ENCODE measurements at regions of chr22 and their contacts with region 1.

Region 1: GRCh38 chr22:26461188-26461810 is 22.3 kb downstream of the HPS4 start:
- DNase-seq: peak; percentile 53 to 83 (median 70)
- ATAC-seq: peak; percentile 48 to 65
- H3K4me3 ChIP-seq: no peak overlapping the region
- H3K27ac ChIP-seq: no peak overlapping the region
- H3K4me1 ChIP-seq: no peaks in the 10 kb centered on the region
- H3K27me3 ChIP-seq: no peaks in the 10 kb centered on the region

Region 2: DNA sequence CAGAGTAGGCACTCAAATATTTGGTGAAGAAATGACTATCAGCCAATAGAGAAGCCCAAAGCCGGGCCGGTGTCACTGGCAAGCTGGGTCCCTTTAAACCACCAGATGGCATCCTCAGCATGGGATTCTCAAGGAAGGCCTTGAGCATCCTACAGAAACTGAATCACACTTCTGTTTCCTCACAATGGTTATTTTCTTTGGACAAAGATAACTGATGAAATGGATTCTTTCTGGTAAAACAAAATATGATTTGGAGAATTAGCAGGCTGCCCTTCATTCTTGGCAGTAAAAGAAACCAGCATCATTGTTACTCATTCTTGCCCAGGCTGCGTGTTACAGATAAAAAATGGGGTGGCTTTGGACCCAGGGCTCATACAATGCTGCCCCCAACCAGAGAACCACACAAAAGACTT is 62.6 kb before region 1 on chr22:
- intact Hi-C with region 1: loop called in 3 of 4 experiments (anchors 5 kb)
- DNase-seq: peak; percentile 42 to 63 (median 58)
- ATAC-seq: peak; percentile 67 to 88
- H3K4me3 ChIP-seq: no peak overlapping the region
- H3K27ac ChIP-seq: no peak overlapping the region
- H3K4me1 ChIP-seq: no peaks in the 10 kb centered on the region
- H3K27me3 ChIP-seq: no peaks in the 10 kb centered on the region

Region 3: DNA sequence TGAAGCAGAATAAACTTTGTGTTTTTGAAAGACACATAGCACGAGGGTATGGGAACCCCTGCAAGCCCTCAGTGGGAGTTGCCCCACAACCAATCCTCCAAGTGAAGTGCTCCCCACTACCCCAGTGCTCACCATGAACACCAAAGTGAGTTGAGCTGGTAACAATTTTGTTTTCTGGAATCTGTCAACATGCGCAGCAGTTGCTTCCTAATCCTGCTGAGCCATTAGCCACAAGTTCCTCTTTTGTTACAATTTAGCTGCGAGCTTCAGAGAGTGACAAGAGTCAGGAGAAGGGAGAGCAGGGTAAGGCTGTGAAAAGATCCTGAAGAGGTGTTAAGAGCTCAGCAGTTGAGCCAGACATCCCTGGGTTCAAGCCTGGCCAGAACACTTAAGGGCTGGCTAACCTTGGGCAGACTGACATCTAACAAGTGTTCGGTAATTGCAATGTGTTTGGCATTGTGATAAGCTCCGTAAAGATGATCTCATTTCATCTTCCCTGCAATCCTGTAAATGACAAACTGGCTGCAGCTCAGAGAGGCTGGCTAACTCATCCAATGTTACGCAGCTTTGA is 56.4 kb before region 1 on chr22:
- intact Hi-C with region 1: loop called in 1 of 4 experiments (anchors 5 kb)
- DNase-seq: no peak
- ATAC-seq: peak; percentile 21 to 81
- H3K4me3 ChIP-seq: no peak overlapping the region
- H3K27ac ChIP-seq: no peak overlapping the region
- H3K4me1 ChIP-seq: no peaks in the 10 kb centered on the region
- H3K27me3 ChIP-seq: no peaks in the 10 kb centered on the region

Region 4: DNA sequence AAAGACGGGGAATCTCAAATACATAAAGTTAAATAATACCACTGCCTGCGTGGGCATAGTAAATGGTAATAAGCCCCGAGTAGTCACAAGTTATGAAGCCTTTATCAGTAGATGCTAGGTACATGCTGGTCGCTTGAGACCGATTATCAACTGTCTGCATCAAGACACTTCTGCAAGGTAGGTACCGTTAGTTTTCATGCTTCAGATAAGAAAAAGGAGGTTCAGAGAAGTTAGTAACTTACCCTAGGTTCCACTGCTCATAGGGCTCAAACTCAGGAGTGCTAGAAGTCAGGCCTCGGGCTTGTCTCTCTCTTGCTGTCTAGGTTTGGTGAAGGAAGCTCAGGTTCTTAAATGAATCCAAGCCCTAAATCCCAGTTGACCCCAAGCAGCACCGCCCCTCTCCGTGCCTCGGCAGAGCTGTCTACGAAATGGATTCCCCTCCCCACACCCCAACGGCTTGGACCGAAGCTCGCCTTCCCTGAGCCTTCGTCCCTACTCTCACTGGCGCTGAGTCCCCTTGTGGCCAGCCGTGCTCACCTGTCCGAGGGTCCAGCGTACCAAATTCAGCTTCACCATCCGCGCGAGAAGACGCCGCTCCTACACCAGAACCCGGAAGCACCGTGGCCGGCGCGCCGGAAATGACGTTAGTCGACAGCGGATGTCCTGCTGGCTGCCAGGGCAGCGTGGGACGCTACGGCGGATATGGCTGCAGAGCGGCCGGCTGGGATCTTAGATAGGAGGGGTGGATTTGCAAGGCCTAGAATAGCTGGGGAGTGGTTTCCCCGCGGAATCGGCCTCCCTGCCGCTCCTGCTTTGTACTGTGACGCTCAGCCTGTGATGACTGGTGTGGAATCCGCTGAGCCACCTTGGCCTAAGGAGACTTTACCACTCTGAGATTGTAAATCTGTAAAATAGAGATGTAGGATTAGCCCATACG is 50.8 kb after region 1 on chr22 and contains the start of gene TFIP11:
- intact Hi-C with region 1: no loop called
- DNase-seq: peak; percentile 95 to 98 (median 98)
- ATAC-seq: peak; percentile 97 to 98
- H3K4me3 ChIP-seq: peak within 1 kb of the TSS; percentile 67
- H3K27ac ChIP-seq: peak within 1 kb of the TSS; percentile 36
- H3K4me1 ChIP-seq: peaks cover 4% of the 10 kb centered on the region
- H3K27me3 ChIP-seq: no peaks in the 10 kb centered on the region
- total RNA-seq, gene TFIP11: 19.8 to 28.7 (median 25.4) TPM

Measured in right cardiac atrium (tissue), 5 donors.